GM10248 (cell line): ENCODE measurements at regions of chr21 and their contacts with region 1.

Region 1: DNA sequence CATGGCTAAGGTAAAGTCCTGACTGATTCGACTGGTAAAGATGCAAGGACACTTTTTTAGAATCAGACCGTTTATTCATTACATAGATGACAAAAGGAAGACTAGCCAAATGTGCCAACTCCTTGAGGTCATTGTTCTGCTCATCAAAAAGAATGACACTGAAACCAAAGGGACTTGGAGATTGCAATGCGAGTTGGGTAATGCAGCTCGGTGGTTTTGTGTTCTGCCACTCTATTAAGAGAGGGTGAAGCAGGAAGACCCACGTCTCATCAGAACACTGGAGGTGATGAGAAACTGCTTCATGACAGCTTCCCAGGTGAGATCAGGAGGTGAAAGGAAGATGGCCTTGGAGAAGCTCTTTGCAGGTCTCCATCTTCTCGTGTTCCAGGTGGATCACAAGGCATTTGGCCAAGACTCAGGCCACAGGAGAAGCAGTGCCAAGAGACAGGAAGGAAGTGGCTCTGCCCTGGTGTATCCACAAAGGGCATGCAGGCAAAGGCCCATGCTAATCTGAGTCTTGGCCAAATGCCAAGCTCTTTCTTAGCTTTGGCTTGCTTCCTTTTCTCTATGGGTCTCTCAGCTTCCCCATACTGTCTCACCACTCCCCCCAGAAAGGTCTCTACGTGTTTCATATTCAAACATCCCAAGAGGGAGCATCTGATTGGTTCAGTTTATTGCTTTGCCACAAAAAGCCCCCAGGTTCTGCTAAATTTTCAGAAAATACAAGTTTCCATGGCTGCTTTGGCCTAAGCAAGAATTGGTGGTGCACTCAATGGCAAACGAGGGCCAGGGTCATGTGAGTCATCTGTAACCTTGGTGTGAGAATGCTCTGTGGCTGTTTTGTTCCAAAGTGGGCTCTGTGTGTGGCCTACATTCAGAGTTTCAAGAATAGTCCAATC is 5.7 kb upstream of the CCT8 start:
- DNase-seq: no peak
- CTCF ChIP-seq: no peak

Region 2: GRCh38 chr21:29091032-29091431 is 11.9 kb after region 1 on chr21:
- CTCF ChIA-PET with region 1: interaction called, 48 read pairs
- POLR2A ChIA-PET with region 1: interaction called, 4 read pairs
- DNase-seq: no peak
- CTCF ChIP-seq: no peak